ENCODE measurements at regions of chr17 and their contacts with region 1.

Region 1: DNA sequence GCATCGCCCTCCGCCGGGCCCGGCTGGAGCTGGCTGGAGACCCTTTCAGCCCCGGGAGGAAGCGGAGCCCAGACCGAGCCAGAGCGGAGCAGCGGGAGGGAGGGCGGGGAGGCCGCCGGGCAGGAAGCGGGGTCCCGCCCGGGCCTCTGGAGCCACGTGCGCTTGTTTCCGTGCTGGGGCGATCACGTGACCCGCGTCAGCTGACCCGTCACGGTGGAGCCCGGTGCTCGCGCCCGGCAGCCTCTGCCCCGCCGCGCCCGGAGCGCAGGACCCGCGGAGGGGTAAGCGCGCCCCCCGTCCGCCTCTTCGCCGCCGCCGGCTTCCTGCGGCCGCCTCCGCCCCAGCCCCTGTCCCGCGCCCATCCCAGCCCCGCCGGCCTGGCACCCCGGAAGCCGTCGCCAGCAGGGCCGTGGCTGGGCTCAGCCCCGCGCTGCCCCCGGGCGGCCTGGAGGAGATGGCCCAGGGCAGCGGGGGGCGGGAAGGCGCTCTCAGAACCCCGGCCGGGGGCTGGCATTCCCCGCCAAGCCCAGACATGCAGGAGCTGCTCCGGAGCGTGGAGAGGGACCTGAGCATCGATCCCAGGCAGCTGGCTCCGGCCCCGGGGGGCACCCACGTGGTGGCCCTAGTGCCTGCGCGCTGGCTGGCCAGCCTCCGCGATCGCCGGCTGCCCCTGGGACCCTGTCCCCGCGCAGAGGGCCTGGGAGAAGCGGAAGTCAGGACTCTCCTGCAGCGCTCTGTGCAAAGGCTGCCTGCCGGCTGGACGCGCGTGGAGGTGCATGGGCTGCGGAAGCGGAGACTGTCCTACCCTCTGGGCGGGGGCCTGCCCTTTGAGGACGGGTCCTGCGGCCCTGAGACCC is at the start of gene WDR81:
- DNase-seq: peak; percentile 81 to 87 (median 84)
- H3K4me3 ChIP-seq: peak within 1 kb of the TSS; percentile 11 to 72
- H3K4me3 Mint-ChIP-seq: peak within 1 kb of the TSS; percentile 70 to 85 (median 82)
- H3K27ac ChIP-seq: peak within 1 kb of the TSS; percentile 64
- H3K27ac Mint-ChIP-seq: peak within 1 kb of the TSS; percentile 81 to 96 (median 89)
- H3K4me1 ChIP-seq: peaks cover 64% of the 10 kb centered on the region
- H3K4me1 Mint-ChIP-seq: peaks cover 16 to 69% (median 34%) of the 10 kb centered on the region in 4 donors
- H3K27me3 ChIP-seq: no peaks in the 10 kb centered on the region
- H3K27me3 Mint-ChIP-seq: no peaks in the 10 kb centered on the region
- total RNA-seq, gene WDR81: 36.3 to 40.3 TPM

Region 2: DNA sequence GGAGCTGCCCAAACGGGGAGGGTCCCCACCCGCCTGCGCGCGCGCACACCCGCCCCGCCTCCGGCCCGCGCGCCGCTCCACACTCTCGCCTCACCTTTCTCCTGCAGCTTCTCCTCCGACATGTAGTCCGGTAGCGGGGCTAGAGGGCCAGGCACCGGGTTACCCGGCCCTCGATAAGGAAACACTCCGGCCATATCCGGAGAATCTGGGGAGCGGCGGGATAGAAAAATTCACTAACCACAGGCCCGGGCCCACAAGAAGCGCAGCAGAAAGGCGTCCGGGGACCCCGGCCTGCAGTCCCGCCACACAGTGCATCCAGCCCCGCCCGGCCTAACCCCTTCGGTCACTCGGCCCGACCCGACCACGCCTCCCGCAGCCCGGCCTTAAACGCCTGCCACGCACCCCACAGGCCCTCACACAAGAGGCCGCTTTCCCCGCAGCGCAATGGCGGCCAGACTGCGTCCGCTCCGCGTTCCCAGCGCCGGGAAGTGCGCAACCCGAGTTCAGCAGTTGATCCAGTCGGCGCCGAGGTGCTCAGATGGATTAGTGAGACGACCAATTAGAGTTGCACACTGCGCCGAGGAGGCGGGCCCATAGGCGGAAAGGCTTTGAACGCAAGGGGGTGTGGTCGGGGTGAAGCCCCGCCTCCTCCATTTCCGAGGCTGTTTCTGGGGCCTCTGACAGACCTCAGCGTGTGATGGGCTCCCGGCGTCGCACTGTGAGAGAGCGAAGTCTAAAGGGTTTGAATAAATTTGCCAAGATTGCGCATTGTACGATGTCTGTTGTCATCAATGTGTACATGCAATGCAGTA is 40.1 kb before region 1 on chr17 and contains the start of gene PRPF8:
- CTCF ChIA-PET with region 1: interaction called, 3 read pairs
- POLR2A ChIA-PET with region 1: interaction called, 11 read pairs
- intact Hi-C with region 1: no loop called
- DNase-seq: peak; percentile 98 to 99 (median 99)
- H3K4me3 ChIP-seq: peak within 1 kb of the TSS; percentile 83 to 96
- H3K4me3 Mint-ChIP-seq: peak within 1 kb of the TSS; percentile 97 to 99 (median 99)
- H3K27ac ChIP-seq: peak within 1 kb of the TSS; percentile 96
- H3K27ac Mint-ChIP-seq: peak within 1 kb of the TSS; percentile 93 to 100 (median 99)
- H3K4me1 ChIP-seq: peaks cover 29% of the 10 kb centered on the region
- H3K4me1 Mint-ChIP-seq: peaks cover 32 to 56% (median 41%) of the 10 kb centered on the region in 4 donors
- H3K27me3 ChIP-seq: no peaks in the 10 kb centered on the region
- H3K27me3 Mint-ChIP-seq: no peaks in the 10 kb centered on the region
- total RNA-seq, gene PRPF8: 429 to 464 TPM

Region 3: GRCh38 chr17:1764284-1764683 is 39.5 kb after region 1 on chr17:
- CTCF ChIA-PET with region 1: interaction called, 21 read pairs
- POLR2A ChIA-PET with region 1: interaction called, 62 read pairs
- intact Hi-C with region 1: loop called (anchors 5 kb)
- DNase-seq: peak; percentile 43 to 83 (median 76)
- H3K4me3 ChIP-seq: no peak overlapping the region
- H3K4me3 Mint-ChIP-seq: peak overlapping the region; percentile 40 to 86 (median 66)
- H3K27ac ChIP-seq: peak overlapping the region; percentile 43
- H3K27ac Mint-ChIP-seq: peak overlapping the region; percentile 51 to 97 (median 92)
- H3K4me1 ChIP-seq: peaks cover 34% of the 10 kb centered on the region
- H3K4me1 Mint-ChIP-seq: peaks cover 17 to 49% (median 22%) of the 10 kb centered on the region in 4 donors
- H3K27me3 ChIP-seq: no peaks in the 10 kb centered on the region
- H3K27me3 Mint-ChIP-seq: no peaks in the 10 kb centered on the region

Region 4: DNA sequence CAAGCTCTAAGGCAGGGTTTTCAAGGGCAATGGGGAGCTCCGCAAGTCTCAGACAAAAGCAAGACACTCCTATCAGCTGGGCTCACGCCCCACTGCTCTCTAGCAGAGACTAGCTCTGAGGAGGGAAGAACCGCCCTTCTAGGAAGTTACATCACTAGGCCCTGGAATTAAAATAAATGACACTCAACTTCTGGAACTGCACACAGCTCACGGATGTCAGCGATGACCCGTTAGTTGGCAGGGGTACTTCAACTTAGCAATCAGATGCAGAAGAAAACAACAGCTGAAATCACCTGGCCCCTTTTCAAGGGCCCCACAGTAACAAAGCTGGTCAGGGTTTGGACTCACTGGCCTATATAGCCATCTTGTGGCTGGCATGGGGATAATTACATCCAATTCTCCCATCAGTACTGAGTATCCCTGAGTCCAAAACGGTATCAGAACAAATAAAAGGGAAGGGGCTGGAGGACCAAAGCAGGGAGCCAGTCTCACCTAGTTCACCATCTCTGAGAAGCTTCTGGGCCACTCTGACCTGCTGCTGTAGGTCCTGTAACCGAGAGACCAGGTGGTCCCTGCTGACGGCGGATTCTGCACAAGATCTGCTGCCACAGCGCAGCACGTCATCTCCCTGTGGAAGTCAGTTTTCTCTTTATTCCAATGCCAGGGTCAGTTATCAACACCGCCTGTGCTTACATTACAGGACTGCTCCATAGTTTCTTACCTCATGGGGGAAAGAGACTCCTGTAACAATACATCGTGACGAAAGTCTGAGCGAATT is 59.3 kb after region 1 on chr17:
- CTCF ChIA-PET with region 1: interaction called, 161 read pairs
- POLR2A ChIA-PET with region 1: interaction called, 13 read pairs
- intact Hi-C with region 1: loop called (anchors 1 kb)
- DNase-seq: peak in 4 of 5 donors; percentile 18 to 37 (median 31)
- H3K4me3 ChIP-seq: no peak overlapping the region
- H3K4me3 Mint-ChIP-seq: no peak overlapping the region
- H3K27ac ChIP-seq: no peak overlapping the region
- H3K27ac Mint-ChIP-seq: peak overlapping the region in 4 of 7 donors; percentile 10 to 74 (median 48)
- H3K4me1 ChIP-seq: no peaks in the 10 kb centered on the region
- H3K4me1 Mint-ChIP-seq: peaks cover 0 to 10% (median 1%) of the 10 kb centered on the region in 4 donors
- H3K27me3 ChIP-seq: no peaks in the 10 kb centered on the region
- H3K27me3 Mint-ChIP-seq: no peaks in the 10 kb centered on the region

Region 5: GRCh38 chr17:1865252-1866037 is 140.7 kb after region 1 on chr17:
- CTCF ChIA-PET with region 1: interaction called, 30 read pairs
- POLR2A ChIA-PET with region 1: interaction called, 4 read pairs
- intact Hi-C with region 1: loop called (anchors 1 kb)
- DNase-seq: peak; percentile 53 to 68 (median 64)
- H3K4me3 ChIP-seq: no peak overlapping the region
- H3K4me3 Mint-ChIP-seq: no peak overlapping the region
- H3K27ac ChIP-seq: no peak overlapping the region
- H3K27ac Mint-ChIP-seq: peak overlapping the region in 1 of 7 donors; percentile 12
- H3K4me1 ChIP-seq: peaks cover 17% of the 10 kb centered on the region
- H3K4me1 Mint-ChIP-seq: peaks cover 13 to 25% (median 20%) of the 10 kb centered on the region in 4 donors
- H3K27me3 ChIP-seq: no peaks in the 10 kb centered on the region
- H3K27me3 Mint-ChIP-seq: no peaks in the 10 kb centered on the region

Region 6: GRCh38 chr17:2041561-2042366 is 317.0 kb after region 1 on chr17 and contains the start of gene OVCA2:
- CTCF ChIA-PET with region 1: interaction called, 3 read pairs
- POLR2A ChIA-PET with region 1: no interaction called
- intact Hi-C with region 1: loop called (anchors 1 kb)
- DNase-seq: peak; percentile 96 to 98 (median 97)
- H3K4me3 ChIP-seq: peak within 1 kb of the TSS; percentile 64 to 79
- H3K4me3 Mint-ChIP-seq: peak within 1 kb of the TSS; percentile 90 to 94 (median 92)
- H3K27ac ChIP-seq: peak within 1 kb of the TSS; percentile 85
- H3K27ac Mint-ChIP-seq: peak within 1 kb of the TSS; percentile 89 to 98 (median 96)
- H3K4me1 ChIP-seq: peaks cover 24% of the 10 kb centered on the region
- H3K4me1 Mint-ChIP-seq: peaks cover 6 to 32% (median 14%) of the 10 kb centered on the region in 4 donors
- H3K27me3 ChIP-seq: no peaks in the 10 kb centered on the region
- H3K27me3 Mint-ChIP-seq: no peaks in the 10 kb centered on the region
- total RNA-seq, gene OVCA2: 27.9 to 36.7 TPM